ENCODE measurements at regions of chr10 and their contacts with region 1.

Region 1: DNA sequence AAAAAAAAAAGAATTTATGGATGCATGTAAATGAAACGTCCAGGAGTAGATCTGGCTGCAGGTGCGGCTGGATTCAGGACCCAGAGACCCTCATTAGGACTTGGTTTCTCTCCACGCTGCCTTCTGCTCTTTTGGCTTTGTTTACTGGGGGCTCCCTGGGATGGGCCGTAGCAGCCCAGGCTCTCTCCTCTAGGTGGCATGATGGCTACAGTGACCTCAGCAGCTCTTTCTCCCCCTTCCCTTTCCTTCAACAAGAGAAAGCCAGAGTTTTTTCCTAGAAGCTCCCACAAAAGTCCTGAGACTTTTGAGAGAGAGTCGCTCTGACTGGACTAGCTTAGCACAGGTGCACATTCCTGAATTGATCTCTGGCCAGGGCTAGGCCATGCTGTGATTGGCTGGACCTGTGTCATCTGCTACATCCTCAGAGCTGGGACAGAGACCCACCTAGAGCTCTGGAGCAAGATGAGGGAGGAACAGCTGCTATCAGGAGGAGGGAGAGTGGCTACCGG is 67.8 kb upstream of the PDCD4 start:
- DNase-seq: peak in 1 of 2 donors; percentile 58
- ATAC-seq: peak; percentile 88
- H3K4me3 ChIP-seq: no peak overlapping the region
- H3K27ac ChIP-seq: peak overlapping the region in 1 of 2 donors; percentile 49
- H3K4me1 ChIP-seq: peaks cover 0 to 3% of the 10 kb centered on the region in 2 donors
- H3K27me3 ChIP-seq: no peaks in the 10 kb centered on the region

Region 2: GRCh38 chr10:110746254-110746826 is 57.5 kb before region 1 on chr10:
- intact Hi-C with region 1: loop called in 1 of 2 experiments (anchors 5 kb)
- DNase-seq: no peak
- ATAC-seq: peak; percentile 87
- H3K4me3 ChIP-seq: no peak overlapping the region
- H3K27ac ChIP-seq: no peak overlapping the region
- H3K4me1 ChIP-seq: no peaks in the 10 kb centered on the region
- H3K27me3 ChIP-seq: no peaks in the 10 kb centered on the region